ENCODE measurements at regions of chr5 and their contacts with region 1.

Region 1: DNA sequence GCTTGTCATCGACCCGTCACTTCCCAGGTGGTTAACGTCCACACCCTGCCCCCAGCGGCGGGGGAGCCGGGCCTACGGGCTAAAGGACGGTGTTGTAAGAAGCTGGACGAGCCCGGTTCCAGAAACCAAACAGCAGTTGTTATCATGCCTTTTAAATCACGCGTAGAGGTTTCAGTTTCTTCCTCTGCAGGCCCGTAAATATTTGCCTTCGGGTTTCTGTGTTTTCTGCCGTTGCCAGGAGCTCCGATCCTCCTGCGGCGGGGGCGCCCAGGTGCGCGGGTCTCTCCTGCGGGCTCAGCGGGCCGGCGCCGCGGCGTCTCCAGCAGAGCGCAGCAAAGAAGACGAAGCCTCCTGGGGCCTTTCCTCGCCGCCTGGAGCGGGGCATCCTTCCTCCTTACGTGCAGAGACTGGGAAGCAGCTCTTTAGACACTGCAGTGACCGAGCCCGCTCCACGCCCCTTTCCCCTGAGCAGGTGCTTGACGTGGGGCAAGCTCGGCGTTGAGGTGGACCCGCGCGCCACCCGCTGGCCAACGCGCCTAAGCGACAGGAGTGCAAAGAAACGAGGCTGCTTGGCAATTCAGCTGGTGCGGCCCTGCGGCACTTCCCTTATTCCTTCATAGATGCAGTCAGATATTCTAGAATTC is 21.8 kb upstream of the TTC1 start:
- DNase-seq: peak; percentile 94
- H3K4me3 ChIP-seq: peak overlapping the region; percentile 40 to 59 (median 49)
- H3K27ac ChIP-seq: no peak overlapping the region
- H3K4me1 ChIP-seq: peaks cover 6 to 10% (median 9%) of the 10 kb centered on the region in 4 donors
- H3K27me3 ChIP-seq: peaks cover 0 to 62% (median 6%) of the 10 kb centered on the region in 4 donors
- CTCF ChIP-seq: peak; percentile 38 to 57 (median 44)
- EP300 ChIP-seq: no peak
- POLR2A ChIP-seq: no peak

Region 2: DNA sequence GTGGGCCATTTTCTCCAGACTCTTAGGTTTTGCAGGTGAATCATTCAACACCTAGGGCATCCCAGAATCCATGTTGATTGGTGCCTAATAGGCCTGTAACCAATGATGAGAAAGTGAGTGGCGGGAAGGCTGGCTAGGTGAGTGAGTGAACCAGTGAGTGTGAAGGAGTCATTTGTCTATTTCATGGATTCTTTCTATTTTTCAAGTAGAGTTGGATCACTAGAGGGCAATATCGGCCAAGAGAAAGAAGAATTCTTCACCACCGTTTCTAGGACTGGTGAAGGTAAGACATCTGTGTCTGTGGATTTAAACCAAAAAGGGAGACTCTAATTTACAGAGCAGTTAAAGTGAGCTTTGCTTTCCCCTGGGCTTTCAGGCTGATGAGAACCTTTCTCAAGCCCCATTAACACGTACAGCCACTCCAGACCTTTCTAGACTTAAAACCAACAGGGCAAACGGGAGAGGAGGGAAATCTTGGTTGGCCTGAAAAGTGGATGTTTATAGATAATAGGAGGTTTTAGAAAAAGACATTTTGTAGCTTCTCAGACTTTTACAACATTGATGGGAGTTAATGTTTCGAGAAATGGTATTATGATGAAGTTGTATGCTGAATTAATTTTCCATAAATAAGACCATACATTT is 542.6 kb before region 1 on chr5:
- intact Hi-C with region 1: loop called (anchors 5 kb)
- DNase-seq: no peak
- H3K4me3 ChIP-seq: no peak overlapping the region
- H3K27ac ChIP-seq: no peak overlapping the region
- H3K4me1 ChIP-seq: no peaks in the 10 kb centered on the region
- H3K27me3 ChIP-seq: peaks cover 0 to 23% (median 4%) of the 10 kb centered on the region in 4 donors
- CTCF ChIP-seq: peak in 1 of 3 experiments; percentile 17
- EP300 ChIP-seq: no peak
- POLR2A ChIP-seq: no peak

Region 3: GRCh38 chr5:159515909-159516415 is 471.2 kb before region 1 on chr5:
- intact Hi-C with region 1: loop called (anchors 10 kb)
- DNase-seq: no peak
- H3K4me3 ChIP-seq: no peak overlapping the region
- H3K27ac ChIP-seq: no peak overlapping the region
- H3K4me1 ChIP-seq: no peaks in the 10 kb centered on the region
- H3K27me3 ChIP-seq: peaks cover 0 to 25% (median 0%) of the 10 kb centered on the region in 4 donors
- CTCF ChIP-seq: peak; percentile 37 to 62 (median 48)
- EP300 ChIP-seq: no peak
- POLR2A ChIP-seq: no peak

Region 4: DNA sequence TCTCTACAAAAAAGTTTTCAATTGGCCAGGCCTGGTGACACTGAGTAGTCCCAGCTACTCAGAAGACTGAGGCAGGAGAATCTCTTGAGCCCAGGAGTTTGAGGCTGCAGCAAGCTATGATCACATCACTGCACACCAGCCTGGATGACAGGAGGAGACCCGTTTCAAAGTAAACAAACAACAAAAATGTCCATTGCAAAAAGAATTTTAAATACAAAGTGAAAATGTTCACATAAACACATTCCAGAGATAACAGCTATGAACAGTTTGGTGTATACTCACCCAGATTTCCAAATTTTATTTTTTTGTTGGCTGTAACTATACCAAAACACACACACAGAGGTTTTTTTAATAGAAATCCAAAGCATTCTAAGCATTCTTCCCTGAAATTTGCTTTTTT is 31.1 kb before region 1 on chr5:
- intact Hi-C with region 1: no loop called
- DNase-seq: no peak
- H3K4me3 ChIP-seq: no peak overlapping the region
- H3K27ac ChIP-seq: no peak overlapping the region
- H3K4me1 ChIP-seq: no peaks in the 10 kb centered on the region
- H3K27me3 ChIP-seq: peaks cover 0 to 5% (median 0%) of the 10 kb centered on the region in 4 donors
- CTCF ChIP-seq: no peak
- EP300 ChIP-seq: no peak
- POLR2A ChIP-seq: no peak

Region 5: DNA sequence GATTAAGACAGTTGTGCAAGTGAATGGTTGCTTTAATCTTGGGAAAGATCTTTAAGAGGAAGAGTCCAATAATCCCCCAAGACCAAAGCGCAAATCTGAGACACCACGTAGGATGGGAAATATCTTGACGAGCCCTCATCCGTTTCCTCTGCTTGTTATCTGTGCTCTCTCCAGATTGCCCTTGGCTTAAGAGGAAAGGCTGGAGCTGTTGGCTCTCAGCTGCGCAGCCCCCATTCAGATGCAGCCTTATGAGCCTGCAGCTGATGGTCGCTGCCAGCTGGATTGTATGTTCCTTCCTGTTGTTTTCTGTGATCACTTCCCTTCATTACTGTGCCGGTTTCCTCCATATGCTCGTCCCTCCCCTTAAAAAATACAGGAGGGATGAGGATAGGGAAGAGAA is 84.4 kb after region 1 on chr5:
- intact Hi-C with region 1: no loop called
- DNase-seq: no peak
- H3K4me3 ChIP-seq: peak overlapping the region in 1 of 4 donors; percentile 9
- H3K27ac ChIP-seq: no peak overlapping the region
- H3K4me1 ChIP-seq: peaks cover 0 to 8% (median 4%) of the 10 kb centered on the region in 4 donors
- H3K27me3 ChIP-seq: no peaks in the 10 kb centered on the region
- CTCF ChIP-seq: no peak
- EP300 ChIP-seq: no peak
- POLR2A ChIP-seq: no peak